ENCODE measurements at regions of chr19 and their contacts with region 1.

Region 1: DNA sequence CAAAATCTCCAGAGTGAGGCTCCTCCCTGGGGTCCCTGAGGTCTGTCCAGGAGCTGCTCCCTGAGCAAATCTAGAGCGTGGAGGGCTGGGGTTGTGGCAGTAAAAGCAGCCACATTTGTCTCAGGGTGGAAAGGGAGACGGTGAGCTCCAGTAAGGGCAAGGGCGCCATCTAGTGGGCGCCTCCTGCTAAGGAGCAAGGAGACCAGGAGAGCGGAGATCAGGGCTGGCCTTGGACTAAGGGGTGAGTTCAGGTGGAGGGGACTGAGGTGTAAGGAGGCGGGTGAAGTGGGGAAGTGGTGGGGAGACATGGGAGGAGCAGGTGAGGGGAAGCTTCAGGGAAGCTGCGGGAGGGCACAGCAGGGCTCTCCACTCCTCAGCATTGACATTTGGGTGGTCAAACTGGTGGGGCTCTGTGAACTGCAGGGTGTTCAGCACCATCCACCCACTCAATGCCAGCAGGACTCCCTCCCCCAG is 5.3 kb upstream of the CEACAM21 start:
- DNase-seq: peak; percentile 97
- H3K4me3 ChIP-seq: no peak overlapping the region
- H3K27ac ChIP-seq: no peak overlapping the region
- H3K4me1 ChIP-seq: peaks cover 2 to 31% (median 16%) of the 10 kb centered on the region in 6 donors
- H3K27me3 ChIP-seq: peaks cover 0 to 31% (median 9%) of the 10 kb centered on the region in 7 donors
- CTCF ChIP-seq: peak; percentile 75 to 97 (median 94)
- POLR2A ChIP-seq: no peak

Region 2: DNA sequence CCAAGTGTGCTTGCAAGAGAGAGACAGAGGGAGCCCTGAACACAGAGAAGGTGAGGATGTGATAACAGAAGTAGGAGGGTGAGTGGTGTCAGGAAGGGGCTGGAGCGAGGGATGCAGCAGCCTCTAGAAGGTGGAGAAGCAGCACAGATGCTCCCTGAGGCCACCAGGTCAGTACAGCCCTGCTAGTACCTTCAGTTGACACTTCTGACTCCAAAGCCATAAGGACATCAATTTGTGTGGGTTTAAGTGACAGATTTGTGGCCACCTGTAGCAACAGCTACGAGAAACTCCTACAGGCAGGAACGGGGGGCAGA is 120.9 kb before region 1 on chr19:
- intact Hi-C with region 1: loop called (anchors 5 kb)
- DNase-seq: no peak
- H3K4me3 ChIP-seq: peak overlapping the region in 1 of 8 donors; percentile 58
- H3K27ac ChIP-seq: no peak overlapping the region
- H3K4me1 ChIP-seq: peaks cover 6 to 33% (median 14%) of the 10 kb centered on the region in 6 donors
- H3K27me3 ChIP-seq: peaks cover 0 to 8% (median 0%) of the 10 kb centered on the region in 7 donors
- CTCF ChIP-seq: no peak
- POLR2A ChIP-seq: no peak

Region 3: GRCh38 chr19:41537789-41538188 is 32.9 kb before region 1 on chr19:
- intact Hi-C with region 1: loop called (anchors 5 kb)
- DNase-seq: no peak
- H3K4me3 ChIP-seq: peak overlapping the region in 1 of 8 donors; percentile 49
- H3K27ac ChIP-seq: peak overlapping the region in 1 of 8 donors; percentile 91
- H3K4me1 ChIP-seq: peaks cover 17 to 68% (median 45%) of the 10 kb centered on the region in 6 donors
- H3K27me3 ChIP-seq: no peaks in the 10 kb centered on the region
- CTCF ChIP-seq: peak; percentile 44 to 84 (median 67)
- POLR2A ChIP-seq: no peak

Region 4: DNA sequence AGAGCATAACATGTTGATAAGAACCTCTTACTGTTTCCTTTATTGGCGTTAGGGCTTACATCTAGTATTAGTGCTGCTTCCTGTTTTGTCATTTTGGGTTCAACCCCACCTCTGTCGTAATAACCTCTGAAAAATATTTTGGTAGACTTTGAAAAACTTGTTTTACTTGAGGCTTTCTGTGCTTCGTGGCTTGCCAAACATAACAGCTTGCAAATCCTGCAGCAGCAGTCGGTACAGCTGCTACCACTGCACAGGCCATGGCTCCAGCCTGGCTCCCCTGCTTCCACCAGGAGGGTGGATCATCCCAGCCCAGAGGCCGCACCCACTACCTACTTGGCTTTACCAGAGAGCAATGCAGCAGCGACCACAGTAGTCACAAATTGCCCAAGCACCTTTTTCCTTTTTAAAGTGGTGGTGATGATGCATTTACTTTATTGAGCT is 68.0 kb after region 1 on chr19:
- intact Hi-C with region 1: no loop called
- DNase-seq: no peak
- H3K4me3 ChIP-seq: peak overlapping the region in 1 of 8 donors; percentile 35
- H3K27ac ChIP-seq: peak overlapping the region in 7 of 8 donors; percentile 71 to 90 (median 81)
- H3K4me1 ChIP-seq: peaks cover 0 to 36% (median 5%) of the 10 kb centered on the region in 6 donors
- H3K27me3 ChIP-seq: peaks cover 0 to 53% (median 0%) of the 10 kb centered on the region in 7 donors
- CTCF ChIP-seq: no peak
- POLR2A ChIP-seq: no peak

Measured in spleen (tissue), 13 donors.